ENCODE measurements at regions of chr4 and their contacts with region 1.

Region 1: GRCh38 chr4:163042306-163042705 is 124.4 kb downstream of the NAF1 start:
- DNase-seq: no peak
- H3K4me3 ChIP-seq: no peak overlapping the region
- H3K27ac ChIP-seq: no peak overlapping the region
- H3K4me1 ChIP-seq: peaks cover 0 to 16% of the 10 kb centered on the region in 2 donors
- H3K27me3 ChIP-seq: no peaks in the 10 kb centered on the region
- CTCF ChIP-seq: no peak

Region 2: GRCh38 chr4:162497564-162498167 is 544.6 kb before region 1 on chr4:
- intact Hi-C with region 1: loop called (anchors 2 kb)
- DNase-seq: no peak
- H3K4me3 ChIP-seq: peak overlapping the region in 1 of 2 donors; percentile 5
- H3K27ac ChIP-seq: no peak overlapping the region
- H3K4me1 ChIP-seq: no peaks in the 10 kb centered on the region
- H3K27me3 ChIP-seq: no peaks in the 10 kb centered on the region
- CTCF ChIP-seq: peak; percentile 67 to 88 (median 77)

Region 3: GRCh38 chr4:162645381-162645780 is 396.9 kb before region 1 on chr4:
- intact Hi-C with region 1: loop called (anchors 5 kb)
- DNase-seq: no peak
- H3K4me3 ChIP-seq: no peak overlapping the region
- H3K27ac ChIP-seq: no peak overlapping the region
- H3K4me1 ChIP-seq: no peaks in the 10 kb centered on the region
- H3K27me3 ChIP-seq: no peaks in the 10 kb centered on the region
- CTCF ChIP-seq: peak in 2 of 3 experiments; percentile 30 to 52

Measured in ascending aorta (tissue), 2 donors.